ENCODE measurements at regions of chr9 and their contacts with region 1.

Region 1: DNA sequence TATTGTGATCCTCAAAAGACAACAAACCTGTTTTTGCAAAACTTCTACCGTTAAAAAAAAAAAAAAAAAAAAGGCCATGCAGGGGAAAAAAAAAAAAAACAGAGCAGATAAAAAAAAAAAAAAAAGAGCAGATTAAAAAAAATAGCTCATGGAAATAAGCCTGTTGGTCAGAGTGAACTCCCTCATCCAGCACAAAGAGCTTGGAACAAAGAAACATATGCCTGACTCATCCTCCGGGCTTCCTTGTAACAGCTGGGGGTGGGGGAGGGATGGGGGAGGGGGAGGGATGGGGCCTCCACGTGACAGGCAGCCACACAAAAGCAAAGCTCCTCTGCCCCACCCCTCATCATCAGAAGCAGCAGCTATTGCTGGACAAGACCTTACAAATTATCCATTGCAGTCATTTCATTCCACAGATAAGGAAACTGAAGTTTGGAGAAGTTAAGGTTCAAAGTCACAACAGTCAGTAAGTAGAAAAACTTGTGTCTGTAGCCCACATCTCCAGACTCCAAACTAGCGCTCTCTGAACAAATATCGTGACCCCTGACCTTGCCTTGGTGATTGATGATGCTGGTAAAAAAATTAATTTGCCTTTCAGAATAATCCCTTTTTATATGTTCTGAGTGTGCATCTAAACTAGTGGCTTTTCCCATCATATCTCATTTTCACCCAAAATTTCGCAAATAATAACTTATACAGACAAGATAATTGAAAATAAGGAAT is 38.9 kb downstream of the SLC35D2 start:
- DNase-seq: peak; percentile 65
- ATAC-seq: peak; percentile 40
- H3K4me3 ChIP-seq: no peak overlapping the region
- H3K27ac ChIP-seq: peak overlapping the region; percentile 36
- H3K4me1 ChIP-seq: peaks cover 21% of the 10 kb centered on the region
- H3K27me3 ChIP-seq: no peaks in the 10 kb centered on the region
- CTCF ChIP-seq: no peak

Region 2: GRCh38 chr9:96266282-96267210 is 78.1 kb before region 1 on chr9:
- CTCF ChIA-PET with region 1: no interaction called
- POLR2A ChIA-PET with region 1: no interaction called
- intact Hi-C with region 1: no loop called
- DNase-seq: no peak
- ATAC-seq: no peak
- H3K4me3 ChIP-seq: no peak overlapping the region
- H3K27ac ChIP-seq: no peak overlapping the region
- H3K4me1 ChIP-seq: no peaks in the 10 kb centered on the region
- H3K27me3 ChIP-seq: no peaks in the 10 kb centered on the region
- CTCF ChIP-seq: no peak

Region 3: GRCh38 chr9:96317335-96317980 is 27.2 kb before region 1 on chr9:
- CTCF ChIA-PET with region 1: no interaction called
- POLR2A ChIA-PET with region 1: no interaction called
- intact Hi-C with region 1: no loop called
- DNase-seq: peak; percentile 65
- ATAC-seq: peak; percentile 50; the same call in 1 of the 2 replicates
- H3K4me3 ChIP-seq: no peak overlapping the region
- H3K27ac ChIP-seq: no peak overlapping the region
- H3K4me1 ChIP-seq: no peaks in the 10 kb centered on the region
- H3K27me3 ChIP-seq: no peaks in the 10 kb centered on the region
- CTCF ChIP-seq: peak; percentile 88

Region 4: GRCh38 chr9:96376891-96377874 is 32.6 kb after region 1 on chr9:
- CTCF ChIA-PET with region 1: no interaction called
- POLR2A ChIA-PET with region 1: interaction called, 18 read pairs
- intact Hi-C with region 1: loop called (anchors 5 kb)
- DNase-seq: peak; percentile 69
- ATAC-seq: peak; percentile 87
- H3K4me3 ChIP-seq: no peak overlapping the region
- H3K27ac ChIP-seq: peak overlapping the region; percentile 58
- H3K4me1 ChIP-seq: peaks cover 16% of the 10 kb centered on the region
- H3K27me3 ChIP-seq: no peaks in the 10 kb centered on the region
- CTCF ChIP-seq: no peak

Region 5: GRCh38 chr9:96391021-96391765 is 46.6 kb after region 1 on chr9:
- CTCF ChIA-PET with region 1: no interaction called
- POLR2A ChIA-PET with region 1: interaction called, 18 read pairs
- intact Hi-C with region 1: no loop called
- DNase-seq: no peak
- ATAC-seq: peak; percentile 13; the same call in 1 of the 2 replicates
- H3K4me3 ChIP-seq: no peak overlapping the region
- H3K27ac ChIP-seq: no peak overlapping the region
- H3K4me1 ChIP-seq: no peaks in the 10 kb centered on the region
- H3K27me3 ChIP-seq: no peaks in the 10 kb centered on the region
- CTCF ChIP-seq: no peak

Region 6: DNA sequence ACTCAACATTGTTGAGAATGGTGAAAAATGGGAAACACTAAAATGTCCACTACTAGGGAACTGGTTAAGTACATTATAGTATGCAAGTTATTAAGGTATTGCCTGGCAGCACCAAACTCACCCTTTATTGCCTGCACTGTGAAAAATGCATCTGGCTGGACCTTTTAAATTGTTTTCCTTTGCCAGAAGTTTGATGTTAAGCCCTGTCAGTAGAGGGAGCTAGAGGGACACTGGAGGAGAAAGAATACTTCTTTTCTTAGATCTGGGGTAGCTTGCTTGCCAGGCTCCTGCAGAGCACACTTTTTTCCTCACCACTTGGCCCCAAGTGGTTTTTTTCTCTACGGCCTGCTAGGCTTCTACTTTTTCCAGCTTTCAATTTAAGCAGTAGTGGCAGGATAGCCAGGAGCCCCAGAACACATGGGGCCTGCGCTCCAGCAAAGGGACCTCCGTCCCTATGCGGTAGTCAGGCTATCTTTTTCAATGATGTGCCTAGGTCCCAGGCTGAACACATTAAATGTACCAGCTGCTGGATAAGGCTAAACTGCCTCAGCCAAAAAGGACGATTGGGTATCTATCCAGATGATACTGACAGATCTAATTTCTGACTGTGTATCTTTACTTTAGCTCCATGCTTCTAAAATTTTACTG is 97.3 kb after region 1 on chr9:
- CTCF ChIA-PET with region 1: no interaction called
- POLR2A ChIA-PET with region 1: no interaction called
- intact Hi-C with region 1: no loop called
- DNase-seq: peak; percentile 59
- ATAC-seq: no peak; the same call in 1 of the 2 replicates
- H3K4me3 ChIP-seq: no peak overlapping the region
- H3K27ac ChIP-seq: no peak overlapping the region
- H3K4me1 ChIP-seq: no peaks in the 10 kb centered on the region
- H3K27me3 ChIP-seq: no peaks in the 10 kb centered on the region
- CTCF ChIP-seq: peak; percentile 59

Measured in PC-3 (cell line).